Left colon (tissue), 2 donors: ENCODE measurements at regions of chr9 and their contacts with region 1.

Region 1: DNA sequence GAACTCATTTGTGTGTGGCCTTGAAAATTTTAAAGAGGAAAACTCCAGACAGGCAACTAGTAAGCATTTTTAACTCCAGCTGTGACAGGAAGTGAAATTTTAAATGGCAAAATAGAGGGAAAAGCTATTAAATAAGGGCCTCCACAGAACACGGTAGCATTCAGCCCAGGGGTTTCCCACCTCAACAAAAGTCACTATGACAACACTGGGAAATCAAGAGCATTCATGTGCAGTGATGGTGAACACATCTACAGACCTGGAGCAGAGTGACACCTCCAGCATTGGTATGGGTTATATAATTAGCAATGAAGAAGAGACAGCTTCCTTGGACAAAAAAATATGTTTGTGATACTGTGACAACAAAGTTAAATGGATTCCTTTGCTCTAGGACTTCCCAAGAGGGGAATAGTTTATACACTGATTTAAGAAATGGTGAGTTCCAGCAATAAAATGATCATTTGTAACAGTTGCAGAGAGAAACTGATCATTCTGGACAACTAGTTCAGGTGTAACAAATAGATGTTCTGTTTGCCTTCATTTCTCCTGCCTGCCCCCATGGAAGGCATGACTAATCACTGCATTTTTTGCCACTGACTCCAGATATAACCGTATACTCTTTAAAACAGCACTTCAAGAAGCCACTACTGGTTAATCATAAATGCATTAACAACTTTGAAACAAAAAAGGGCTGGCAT is 93.3 kb upstream of the SLC44A1 start:
- DNase-seq: no peak
- ATAC-seq: no peak

Region 2: GRCh38 chr9:104927912-104928740 is 223.0 kb before region 1 on chr9 and contains the start of gene ABCA1:
- intact Hi-C with region 1: loop called (anchors 2 to 5 kb)
- DNase-seq: peak; percentile 95 to 96
- ATAC-seq: peak; percentile 79
- total RNA-seq, gene ABCA1: 11.8 to 44.5 TPM

Region 3: GRCh38 chr9:105064315-105065097 is 86.6 kb before region 1 on chr9:
- intact Hi-C with region 1: loop called in 1 of 2 experiments (anchors 5 kb)
- DNase-seq: peak; percentile 91 to 96
- ATAC-seq: peak; percentile 95

Region 4: GRCh38 chr9:105093685-105094084 is 57.5 kb before region 1 on chr9:
- intact Hi-C with region 1: no loop called
- DNase-seq: no peak
- ATAC-seq: no peak

Region 5: DNA sequence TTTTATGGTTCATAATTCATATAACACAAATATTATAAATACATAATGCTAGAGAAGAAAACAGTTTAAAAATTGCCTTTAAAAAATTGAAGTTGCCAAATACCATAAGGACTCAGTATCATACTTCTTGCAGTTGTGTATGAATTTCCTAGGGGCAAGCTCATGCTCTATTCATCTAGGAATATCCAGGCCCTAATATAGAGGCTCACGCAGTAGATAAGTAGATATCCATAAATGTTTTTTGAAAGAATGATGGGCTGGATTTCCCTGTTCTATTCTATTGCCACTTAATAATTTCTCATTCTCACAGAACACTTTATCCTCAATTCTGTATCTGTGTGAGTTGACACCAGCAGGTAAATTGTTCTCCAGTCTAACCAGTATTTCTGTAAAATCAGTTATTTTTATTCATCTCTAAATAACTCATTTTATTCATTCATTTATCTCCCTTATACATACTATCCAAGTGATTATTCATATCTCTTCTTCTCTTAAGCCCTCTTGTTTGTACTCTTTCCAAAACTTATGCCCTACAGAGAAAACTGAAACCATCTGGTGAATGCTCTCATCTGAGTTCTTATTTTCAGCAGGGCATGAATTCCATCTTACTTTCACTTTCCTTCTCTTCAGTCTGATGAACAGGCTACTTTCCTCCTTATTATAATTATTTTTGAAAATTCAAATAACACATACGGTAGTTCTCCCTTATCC is 190.5 kb after region 1 on chr9:
- intact Hi-C with region 1: no loop called
- DNase-seq: no peak
- ATAC-seq: peak; percentile 54